Activated naive CD4-positive, alpha-beta T cell treated with anti-CD3 and anti-CD28 coated beads for 36 hours (primary cell): ENCODE measurements at regions of chr10 and their contacts with region 1.

Region 1: DNA sequence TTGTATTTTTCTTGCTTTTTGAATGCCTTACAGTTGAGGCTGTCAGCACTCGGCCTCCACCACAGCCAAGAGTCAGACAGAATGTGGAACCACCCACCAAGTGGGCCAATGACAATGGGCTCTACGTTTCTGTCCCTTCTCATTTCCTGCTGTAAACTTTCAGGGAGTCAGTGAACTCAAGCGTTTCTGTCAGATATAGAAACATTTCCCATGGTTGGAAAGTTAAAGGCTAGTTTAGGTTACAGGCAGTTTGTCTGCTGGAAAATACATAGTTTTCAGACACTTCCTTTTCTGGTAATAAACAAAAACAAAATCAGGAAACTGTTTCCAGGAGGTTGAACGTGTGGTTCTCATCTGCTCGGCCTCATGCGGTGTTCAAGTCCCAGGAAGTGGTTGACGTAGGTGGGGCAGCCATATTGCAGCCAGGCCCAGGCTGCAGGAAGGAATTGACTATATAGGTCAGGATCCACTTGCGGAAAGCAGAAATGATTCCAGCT is 245.1 kb downstream of the CAMK1D start:
- DNase-seq: peak; percentile 67
- H3K4me3 Mint-ChIP-seq: peak overlapping the region; percentile 30
- H3K27ac Mint-ChIP-seq: peak overlapping the region; percentile 83
- H3K4me1 Mint-ChIP-seq: peaks cover 76% of the 10 kb centered on the region
- H3K27me3 Mint-ChIP-seq: no peaks in the 10 kb centered on the region

Region 2: GRCh38 chr10:12549295-12549694 is 45.2 kb before region 1 on chr10:
- CTCF ChIA-PET with region 1: no interaction called
- intact Hi-C with region 1: loop called (anchors 5 kb)
- DNase-seq: peak; percentile 11
- H3K4me3 Mint-ChIP-seq: no peak overlapping the region
- H3K27ac Mint-ChIP-seq: no peak overlapping the region
- H3K4me1 Mint-ChIP-seq: peaks cover 26% of the 10 kb centered on the region
- H3K27me3 Mint-ChIP-seq: no peaks in the 10 kb centered on the region

Region 3: GRCh38 chr10:12635127-12635541 is 40.6 kb after region 1 on chr10:
- CTCF ChIA-PET with region 1: no interaction called
- intact Hi-C with region 1: loop called (anchors 2 kb)
- DNase-seq: peak; percentile 68
- H3K4me3 Mint-ChIP-seq: peak overlapping the region; percentile 58
- H3K27ac Mint-ChIP-seq: peak overlapping the region; percentile 93
- H3K4me1 Mint-ChIP-seq: peaks cover 47% of the 10 kb centered on the region
- H3K27me3 Mint-ChIP-seq: no peaks in the 10 kb centered on the region